PC-3 (cell line): ENCODE measurements at regions of chr7 and their contacts with region 1.

Region 1: DNA sequence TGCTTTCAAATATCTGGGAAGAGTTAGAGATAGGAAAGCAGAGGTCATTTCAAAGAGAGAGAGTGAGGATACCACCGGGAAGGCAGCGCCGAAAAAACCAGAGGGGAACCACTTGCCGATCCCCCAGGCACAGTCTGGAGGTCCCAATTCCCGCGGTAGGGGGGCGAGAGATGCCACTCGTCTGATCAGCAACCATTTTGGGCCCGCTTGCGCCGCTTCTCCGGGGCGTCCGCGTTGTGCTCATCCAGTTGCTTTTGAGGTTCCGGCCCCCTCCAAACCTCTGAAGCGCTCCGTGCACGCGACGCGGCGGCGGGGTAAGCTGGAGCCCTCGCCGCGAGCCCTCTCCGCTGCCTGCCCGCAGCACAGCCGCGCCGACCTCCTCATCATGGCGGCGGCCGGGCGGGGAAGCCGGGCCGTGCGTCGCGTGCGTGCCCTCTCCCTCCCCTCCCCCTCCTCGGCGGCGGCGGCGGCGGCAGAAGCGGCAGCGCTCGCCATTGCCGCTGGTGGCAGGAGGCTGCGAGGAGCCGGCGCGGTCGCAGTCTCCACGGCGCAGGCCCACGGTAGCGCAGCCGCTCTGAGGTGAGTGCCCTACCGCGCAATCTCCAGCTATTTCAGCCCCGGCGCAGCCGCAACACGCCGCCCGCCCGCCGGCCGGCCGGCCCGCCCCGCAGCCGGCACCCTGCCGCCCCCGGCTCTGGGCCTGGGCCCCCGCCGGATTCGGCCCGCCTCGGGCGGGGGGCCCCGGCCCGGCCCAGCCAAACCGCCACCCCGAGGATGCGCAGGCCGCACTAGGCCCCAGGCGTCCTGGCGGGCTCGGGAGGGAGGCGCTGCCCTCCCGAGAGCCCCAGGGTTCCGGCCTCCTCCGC is at the start of gene NRF1:
- DNase-seq: peak; percentile 84
- ATAC-seq: peak; percentile 95
- H3K4me3 ChIP-seq: peak within 1 kb of the TSS; percentile 77
- H3K27ac ChIP-seq: peak within 1 kb of the TSS; percentile 71
- H3K4me1 ChIP-seq: peaks cover 24% of the 10 kb centered on the region
- H3K27me3 ChIP-seq: no peaks in the 10 kb centered on the region
- CTCF ChIP-seq: no peak
- total RNA-seq, gene NRF1: 13.6 and 21.1 TPM in 2 replicates

Region 2: DNA sequence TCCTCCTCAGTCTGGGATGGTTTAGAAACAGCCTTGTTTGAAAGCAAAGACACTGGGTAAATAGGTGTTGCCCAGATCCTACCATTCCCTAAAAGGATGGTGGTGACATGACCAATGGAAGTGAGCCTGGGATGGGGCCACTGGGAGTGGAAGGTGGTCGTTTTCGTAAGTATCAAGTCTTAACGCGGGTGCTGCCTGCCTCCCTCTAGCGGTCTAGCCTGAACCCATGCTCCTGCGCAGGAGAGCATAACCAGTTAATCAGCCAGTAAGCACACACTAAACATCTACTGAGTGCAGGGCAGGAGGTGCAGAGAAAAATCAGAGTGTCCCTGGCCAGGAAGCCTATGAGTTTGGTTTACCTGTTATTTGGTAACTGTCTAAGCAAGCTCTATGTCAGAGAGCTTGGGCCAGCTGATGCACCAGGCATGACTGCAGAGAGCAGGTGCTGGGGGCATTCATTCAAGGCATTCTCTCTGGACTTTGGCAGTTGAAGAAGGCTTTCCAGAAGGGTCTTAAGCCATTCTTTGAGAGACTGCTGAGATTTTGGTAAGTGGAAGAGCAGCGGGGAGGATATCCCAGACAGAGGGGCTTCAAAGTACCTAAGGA is 938.5 kb before region 1 on chr7:
- CTCF ChIA-PET with region 1: no interaction called
- POLR2A ChIA-PET with region 1: no interaction called
- intact Hi-C with region 1: no loop called
- DNase-seq: no peak
- ATAC-seq: peak; percentile 48
- H3K4me3 ChIP-seq: no peak overlapping the region
- H3K27ac ChIP-seq: no peak overlapping the region
- H3K4me1 ChIP-seq: no peaks in the 10 kb centered on the region
- H3K27me3 ChIP-seq: no peaks in the 10 kb centered on the region
- CTCF ChIP-seq: no peak

Region 3: GRCh38 chr7:129635300-129636029 is 24.0 kb after region 1 on chr7:
- CTCF ChIA-PET with region 1: interaction called, 3 read pairs
- POLR2A ChIA-PET with region 1: no interaction called
- intact Hi-C with region 1: loop called (anchors 1 kb)
- DNase-seq: peak; percentile 76
- ATAC-seq: peak; percentile 100
- H3K4me3 ChIP-seq: no peak overlapping the region
- H3K27ac ChIP-seq: no peak overlapping the region
- H3K4me1 ChIP-seq: peaks cover 5% of the 10 kb centered on the region; the same call in 1 of the 2 replicates
- H3K27me3 ChIP-seq: no peaks in the 10 kb centered on the region
- CTCF ChIP-seq: peak; percentile 88